ENCODE measurements at regions of chr7 and their contacts with region 1.

Region 1: GRCh38 chr7:129468087-129468486 is 33.9 kb downstream of the STRIP2 start:
- DNase-seq: no peak
- CTCF ChIP-seq: no peak

Region 2: GRCh38 chr7:129351320-129351719 is 116.8 kb before region 1 on chr7:
- in situ Hi-C with region 1: loop called (anchors 10 kb)
- DNase-seq: peak; percentile 32
- CTCF ChIP-seq: no peak

Region 3: DNA sequence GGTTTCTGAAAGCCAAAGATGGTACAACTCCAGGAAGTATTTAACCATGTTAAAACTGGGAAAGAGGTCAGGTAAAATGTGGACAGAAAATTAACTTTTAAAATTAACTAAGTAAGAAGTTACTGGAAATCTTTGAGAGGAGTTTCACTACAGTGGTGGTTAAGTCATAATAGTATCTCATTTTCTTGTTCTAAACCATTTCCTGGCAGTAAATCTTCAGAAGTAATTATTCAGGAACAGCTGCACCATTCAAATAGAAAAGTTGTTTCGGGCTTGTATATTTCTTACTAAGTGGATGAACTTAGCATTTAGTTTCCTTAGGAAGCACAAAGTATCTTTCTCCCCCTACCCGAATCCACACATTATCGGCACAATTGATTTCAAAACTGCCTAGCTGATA is 1173.4 kb after region 1 on chr7:
- in situ Hi-C with region 1: no loop called
- DNase-seq: no peak
- CTCF ChIP-seq: no peak

Measured in GM13976 (cell line).